Activated B cell treated with CpG ODN at 0.5 μM for 24 hours (primary cell): ENCODE measurements at regions of chr6 and their contacts with region 1.

Region 1: GRCh38 chr6:41683510-41684310 is 45.4 kb downstream of the MDFI start:
- DNase-seq: peak; percentile 78
- ATAC-seq: peak; percentile 82
- H3K4me3 Mint-ChIP-seq: peak overlapping the region; percentile 78
- H3K27ac Mint-ChIP-seq: peak overlapping the region; percentile 83
- H3K4me1 Mint-ChIP-seq: peaks cover 20% of the 10 kb centered on the region
- H3K27me3 Mint-ChIP-seq: no peaks in the 10 kb centered on the region
- CTCF ChIP-seq: peak; percentile 54

Region 2: GRCh38 chr6:41269716-41270115 is 414.0 kb before region 1 on chr6:
- CTCF ChIA-PET with region 1: no interaction called
- POLR2A ChIA-PET with region 1: no interaction called
- intact Hi-C with region 1: no loop called
- DNase-seq: no peak
- ATAC-seq: no peak
- H3K4me3 Mint-ChIP-seq: no peak overlapping the region
- H3K27ac Mint-ChIP-seq: no peak overlapping the region
- H3K4me1 Mint-ChIP-seq: peaks cover 27% of the 10 kb centered on the region
- H3K27me3 Mint-ChIP-seq: no peaks in the 10 kb centered on the region
- CTCF ChIP-seq: no peak

Region 3: GRCh38 chr6:41306187-41306854 is 377.4 kb before region 1 on chr6:
- CTCF ChIA-PET with region 1: interaction called, 15 read pairs
- POLR2A ChIA-PET with region 1: no interaction called
- intact Hi-C with region 1: loop called (anchors 1 kb)
- DNase-seq: no peak
- ATAC-seq: no peak
- H3K4me3 Mint-ChIP-seq: no peak overlapping the region
- H3K27ac Mint-ChIP-seq: no peak overlapping the region
- H3K4me1 Mint-ChIP-seq: peaks cover 36% of the 10 kb centered on the region
- H3K27me3 Mint-ChIP-seq: no peaks in the 10 kb centered on the region
- CTCF ChIP-seq: peak; percentile 45

Region 4: DNA sequence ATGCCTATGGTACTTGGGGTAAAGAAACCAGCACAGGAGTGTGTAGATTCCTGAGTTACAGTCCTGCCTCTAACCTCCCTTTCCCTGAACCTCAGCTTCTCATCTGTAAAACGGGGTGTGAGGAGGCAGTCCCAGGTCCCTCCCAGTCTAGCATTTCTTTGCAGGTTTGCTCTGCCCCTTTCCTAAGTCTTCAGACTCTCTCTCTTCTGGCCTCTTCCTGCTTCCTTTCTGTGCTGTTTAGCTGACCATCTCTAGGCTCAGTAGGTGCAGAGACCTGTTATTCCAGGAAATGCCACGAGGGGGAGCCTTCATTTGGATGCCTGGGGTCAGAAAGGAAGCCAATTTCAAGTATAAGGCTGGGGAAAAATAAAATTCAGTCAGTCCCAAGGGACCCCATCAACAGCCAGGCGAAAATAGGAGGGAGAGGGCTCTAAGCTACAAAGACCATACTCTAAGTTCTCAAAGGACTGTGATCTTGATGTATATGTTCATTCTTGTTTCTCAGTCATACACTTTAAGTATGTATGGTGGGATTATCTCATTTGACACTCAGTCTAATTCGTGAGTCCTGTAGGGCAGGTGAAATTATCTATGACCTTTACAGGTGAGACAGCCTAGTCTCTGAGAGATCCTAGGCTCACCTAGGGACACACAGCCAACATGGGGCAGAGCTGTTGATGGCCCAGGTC is 259.2 kb before region 1 on chr6:
- CTCF ChIA-PET with region 1: interaction called, 7 read pairs
- POLR2A ChIA-PET with region 1: interaction called, 6 read pairs
- intact Hi-C with region 1: loop called (anchors 1 kb)
- DNase-seq: peak; percentile 62
- ATAC-seq: peak; percentile 45
- H3K4me3 Mint-ChIP-seq: no peak overlapping the region
- H3K27ac Mint-ChIP-seq: no peak overlapping the region
- H3K4me1 Mint-ChIP-seq: peaks cover 10% of the 10 kb centered on the region
- H3K27me3 Mint-ChIP-seq: peaks cover 11% of the 10 kb centered on the region
- CTCF ChIP-seq: peak; percentile 60

Region 5: GRCh38 chr6:41602864-41603608 is 80.7 kb before region 1 on chr6:
- CTCF ChIA-PET with region 1: interaction called, 22 read pairs
- POLR2A ChIA-PET with region 1: interaction called, 3 read pairs
- intact Hi-C with region 1: loop called (anchors 1 kb)
- DNase-seq: peak; percentile 55
- ATAC-seq: peak; percentile 85
- H3K4me3 Mint-ChIP-seq: peak overlapping the region; percentile 46
- H3K27ac Mint-ChIP-seq: no peak overlapping the region
- H3K4me1 Mint-ChIP-seq: peaks cover 10% of the 10 kb centered on the region
- H3K27me3 Mint-ChIP-seq: no peaks in the 10 kb centered on the region
- CTCF ChIP-seq: no peak

Region 6: DNA sequence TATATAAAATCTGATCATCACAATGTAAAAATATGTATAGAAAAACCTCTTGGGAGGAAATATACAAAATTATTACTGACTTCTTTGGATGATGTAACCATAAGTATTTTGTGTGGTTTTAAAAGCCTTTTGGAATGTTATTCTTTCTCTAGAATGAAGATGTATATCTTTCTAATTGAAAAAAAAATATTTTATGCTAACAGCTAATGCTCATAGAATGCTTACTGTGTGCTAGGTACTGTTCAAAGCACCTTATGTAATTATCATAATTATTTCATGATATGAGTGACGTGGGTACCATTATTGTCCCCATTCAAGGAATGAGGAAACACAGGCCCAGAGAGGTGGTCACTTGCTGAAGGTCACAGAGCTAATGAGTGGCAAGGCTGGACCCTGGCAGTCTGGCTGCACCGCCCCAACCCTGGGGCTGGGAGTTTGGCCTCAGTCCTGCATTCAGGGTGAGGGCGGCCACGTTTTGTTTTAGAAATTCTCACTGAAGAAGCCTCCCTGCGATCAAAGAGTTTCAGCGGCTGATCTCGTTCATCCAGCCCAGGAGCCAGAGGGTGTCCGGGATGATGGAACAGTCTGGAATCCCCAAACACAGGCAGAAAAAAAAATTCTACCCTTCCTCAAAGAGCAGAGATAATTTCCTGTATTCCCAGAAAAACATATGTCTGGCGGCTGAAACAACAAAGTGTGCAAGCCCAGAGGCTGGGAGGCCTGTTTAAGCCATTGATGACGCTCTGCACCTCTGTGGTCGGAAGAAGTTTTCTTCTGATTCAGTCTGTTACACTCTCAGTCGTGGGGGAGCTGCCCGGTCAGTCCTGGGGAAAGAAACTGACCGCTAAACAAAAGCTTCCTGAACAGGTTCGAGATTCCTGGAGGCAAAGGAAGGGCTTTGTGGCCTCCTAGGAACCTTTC is 14.4 kb after region 1 on chr6:
- CTCF ChIA-PET with region 1: interaction called, 50 read pairs
- POLR2A ChIA-PET with region 1: interaction called, 7 read pairs
- intact Hi-C with region 1: loop called (anchors 2 kb)
- DNase-seq: no peak
- ATAC-seq: no peak
- H3K4me3 Mint-ChIP-seq: no peak overlapping the region
- H3K27ac Mint-ChIP-seq: peak overlapping the region; percentile 62
- H3K4me1 Mint-ChIP-seq: peaks cover 87% of the 10 kb centered on the region
- H3K27me3 Mint-ChIP-seq: no peaks in the 10 kb centered on the region
- CTCF ChIP-seq: no peak

Region 7: GRCh38 chr6:41779793-41780545 is 96.3 kb after region 1 on chr6 and contains the start of gene FRS3:
- CTCF ChIA-PET with region 1: interaction called, 5 read pairs
- POLR2A ChIA-PET with region 1: interaction called, 3 read pairs
- intact Hi-C with region 1: loop called (anchors 1 kb)
- DNase-seq: peak; percentile 100
- ATAC-seq: peak; percentile 95
- H3K4me3 Mint-ChIP-seq: peak within 1 kb of the TSS; percentile 93
- H3K27ac Mint-ChIP-seq: peak within 1 kb of the TSS; percentile 63
- H3K4me1 Mint-ChIP-seq: peaks cover 25% of the 10 kb centered on the region
- H3K27me3 Mint-ChIP-seq: no peaks in the 10 kb centered on the region
- CTCF ChIP-seq: no peak
- total RNA-seq, gene FRS3: 6.5 and 6.7 TPM in 2 replicates

Region 8: DNA sequence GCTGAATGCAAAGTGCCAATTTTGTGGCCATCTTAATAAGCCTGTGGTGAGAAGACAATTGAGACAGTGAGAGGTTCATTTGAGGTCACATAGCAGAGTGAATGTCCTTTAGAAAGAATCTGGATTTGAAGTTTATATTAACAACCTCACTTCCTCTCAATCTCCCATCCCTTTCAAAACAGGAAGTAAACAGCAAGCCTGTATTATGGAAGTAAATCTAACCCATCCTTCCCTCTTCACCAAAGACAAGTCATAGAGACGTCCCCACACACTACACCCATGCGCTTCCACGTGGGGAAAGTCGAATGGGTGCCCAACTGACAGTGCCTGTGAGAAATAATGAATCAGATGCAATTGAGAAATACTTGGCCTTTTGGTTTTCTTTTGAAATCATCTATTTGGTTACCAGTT is 286.7 kb after region 1 on chr6:
- CTCF ChIA-PET with region 1: no interaction called
- POLR2A ChIA-PET with region 1: no interaction called
- intact Hi-C with region 1: no loop called
- DNase-seq: no peak
- ATAC-seq: no peak
- H3K4me3 Mint-ChIP-seq: no peak overlapping the region
- H3K27ac Mint-ChIP-seq: peak overlapping the region; percentile 75
- H3K4me1 Mint-ChIP-seq: peaks cover 50% of the 10 kb centered on the region
- H3K27me3 Mint-ChIP-seq: no peaks in the 10 kb centered on the region
- CTCF ChIP-seq: no peak

Region 9: DNA sequence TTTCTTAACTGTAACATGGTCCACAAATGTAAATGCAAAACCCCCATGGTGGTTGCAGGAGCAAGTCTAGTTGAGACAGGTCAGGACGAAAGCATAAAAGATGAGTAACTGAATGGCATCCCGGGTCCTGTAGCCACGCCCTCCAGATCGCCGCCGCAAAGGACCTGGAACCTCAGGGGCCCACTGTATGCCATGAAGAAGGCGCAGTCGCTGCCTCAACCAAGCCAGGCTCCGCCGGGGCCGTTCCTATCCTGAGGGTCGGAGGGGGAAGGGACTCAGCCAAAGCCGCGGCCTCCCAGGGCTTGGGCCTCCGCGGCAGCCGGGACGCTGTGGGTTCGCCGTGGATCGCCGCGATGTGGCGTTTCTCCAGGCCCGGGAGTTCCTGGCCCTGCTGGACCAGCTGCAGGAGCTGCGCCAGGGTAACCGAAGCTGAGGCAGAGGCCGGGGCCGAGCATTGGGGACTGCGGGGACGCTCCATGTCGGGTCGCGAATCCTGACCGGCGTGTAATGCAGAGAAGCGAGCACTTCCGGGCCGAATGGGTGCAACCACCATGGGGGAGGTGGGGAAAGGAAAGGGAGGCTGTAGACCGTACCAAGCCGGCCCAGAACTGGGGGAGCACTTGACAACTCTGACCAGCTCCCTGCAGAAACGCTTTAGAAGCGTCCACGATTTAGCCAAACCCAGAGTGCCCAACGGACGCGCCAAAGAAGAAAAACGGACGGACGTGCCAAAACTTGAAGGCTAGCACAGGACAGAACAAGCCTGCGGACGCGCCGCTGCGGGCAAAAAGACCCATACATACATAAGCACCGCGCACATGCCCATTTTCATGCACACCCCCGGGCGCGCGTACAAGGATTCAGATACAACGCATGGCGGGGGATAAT is 1206.8 kb after region 1 on chr6:
- CTCF ChIA-PET with region 1: no interaction called
- POLR2A ChIA-PET with region 1: no interaction called
- intact Hi-C with region 1: no loop called
- DNase-seq: peak; percentile 76
- ATAC-seq: peak; percentile 97
- H3K4me3 Mint-ChIP-seq: peak overlapping the region; percentile 97
- H3K27ac Mint-ChIP-seq: peak overlapping the region; percentile 93
- H3K4me1 Mint-ChIP-seq: peaks cover 44% of the 10 kb centered on the region
- H3K27me3 Mint-ChIP-seq: no peaks in the 10 kb centered on the region
- CTCF ChIP-seq: no peak